OCI-LY7 (cell line): ENCODE measurements at regions of chr18 and their contacts with region 1.

Region 1: GRCh38 chr18:12990967-12991838 is at the start of gene CEP192:
- DNase-seq: peak; percentile 98
- H3K4me3 ChIP-seq: peak within 1 kb of the TSS; percentile 78
- H3K27ac ChIP-seq: peak within 1 kb of the TSS; percentile 79
- H3K4me1 ChIP-seq: peaks cover 24% of the 10 kb centered on the region
- CTCF ChIP-seq: peak; percentile 44; the same call in 1 of the 2 replicates
- total RNA-seq, gene CEP192: 57.7 and 59.9 TPM in 2 replicates

Region 2: DNA sequence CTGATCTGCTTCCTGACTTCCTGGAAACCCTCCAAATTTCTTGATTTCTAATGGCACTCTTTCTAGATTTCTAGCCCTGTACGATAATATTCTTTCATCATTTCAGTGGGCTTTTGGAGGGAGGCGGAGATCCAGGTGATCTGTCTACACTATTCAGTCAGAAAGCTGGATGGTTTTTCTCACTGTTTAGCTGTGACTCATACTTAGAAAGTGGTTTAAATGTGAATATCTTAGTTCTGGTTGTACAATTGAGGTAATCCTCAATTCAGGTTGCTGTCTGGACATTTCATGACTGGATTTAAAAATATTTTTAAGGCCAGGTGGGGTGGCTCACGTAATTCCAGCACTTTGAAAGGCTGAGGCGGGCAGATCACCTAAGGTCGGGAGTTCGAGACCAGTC is 22.6 kb before region 1 on chr18:
- CTCF ChIA-PET with region 1: interaction called, 3 read pairs
- POLR2A ChIA-PET with region 1: interaction called, 13 read pairs
- intact Hi-C with region 1: no loop called
- DNase-seq: no peak
- H3K4me3 ChIP-seq: no peak overlapping the region
- H3K27ac ChIP-seq: no peak overlapping the region
- H3K4me1 ChIP-seq: no peaks in the 10 kb centered on the region
- CTCF ChIP-seq: no peak

Region 3: DNA sequence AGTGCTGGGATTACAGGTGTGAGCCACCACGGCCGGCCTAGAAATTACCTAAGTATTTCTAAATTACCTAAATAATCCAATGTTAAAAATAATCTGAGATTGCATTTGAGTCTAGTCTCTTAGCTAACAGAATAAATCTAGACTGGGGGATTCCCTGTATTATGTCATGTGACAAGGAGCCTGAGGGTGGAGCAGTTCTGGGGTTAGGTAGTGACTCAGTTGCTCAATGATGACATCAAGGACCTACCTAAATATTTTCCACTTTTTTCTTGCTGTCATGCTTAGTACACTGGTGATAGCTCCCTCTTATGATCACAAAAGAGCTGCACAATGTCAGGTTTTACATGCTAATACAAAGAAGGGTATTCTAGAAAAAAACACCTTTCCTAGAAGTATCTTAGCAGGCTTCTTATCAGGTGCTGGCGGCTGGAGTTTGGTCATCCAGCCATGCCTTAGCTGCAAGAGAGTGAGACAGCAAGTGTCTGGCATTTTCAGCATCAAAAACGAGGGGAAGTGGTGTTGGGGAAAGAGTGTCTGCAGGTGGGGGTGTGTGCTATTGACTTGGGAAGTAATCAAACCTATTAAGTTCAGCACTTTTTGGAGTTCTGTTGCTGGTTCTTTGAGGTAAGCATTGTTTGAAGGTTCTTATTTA is 17.5 kb before region 1 on chr18:
- CTCF ChIA-PET with region 1: no interaction called
- POLR2A ChIA-PET with region 1: interaction called, 13 read pairs
- intact Hi-C with region 1: no loop called
- DNase-seq: no peak
- H3K4me3 ChIP-seq: no peak overlapping the region
- H3K27ac ChIP-seq: no peak overlapping the region
- H3K4me1 ChIP-seq: no peaks in the 10 kb centered on the region
- CTCF ChIP-seq: 0 out of 2 replicates have a peak, but pooled peaks have one; percentile 18